Stomach (tissue), 19 donors: ENCODE measurements at regions of chr1 and their contacts with region 1.

Region 1: DNA sequence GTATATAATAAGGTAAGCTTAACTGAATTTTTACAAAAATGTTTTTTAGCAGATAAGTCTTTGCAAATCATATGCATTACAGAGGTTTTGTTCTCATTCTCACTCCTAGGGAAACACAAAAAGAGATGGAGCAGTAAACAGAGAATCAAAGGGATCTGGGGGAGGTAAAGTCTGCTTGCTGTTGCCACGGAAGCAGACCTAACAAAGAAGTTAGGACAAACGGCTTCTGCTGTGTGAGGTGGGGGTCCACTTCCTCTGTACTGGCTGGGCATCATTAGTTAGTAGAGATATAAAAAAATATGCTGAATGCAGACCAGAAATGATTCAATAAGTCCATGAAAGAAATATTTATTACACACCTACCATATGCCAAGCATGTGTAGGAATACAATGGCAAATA is 34.2 kb downstream of the GJA5 start:
- DNase-seq: no peak
- H3K4me3 ChIP-seq: no peak overlapping the region
- H3K27ac ChIP-seq: no peak overlapping the region
- H3K4me1 ChIP-seq: no peaks in the 10 kb centered on the region
- H3K27me3 ChIP-seq: peaks cover 0 to 40% (median 9%) of the 10 kb centered on the region in 3 donors
- CTCF ChIP-seq: no peak
- EP300 ChIP-seq: no peak
- POLR2A ChIP-seq: no peak

Region 2: DNA sequence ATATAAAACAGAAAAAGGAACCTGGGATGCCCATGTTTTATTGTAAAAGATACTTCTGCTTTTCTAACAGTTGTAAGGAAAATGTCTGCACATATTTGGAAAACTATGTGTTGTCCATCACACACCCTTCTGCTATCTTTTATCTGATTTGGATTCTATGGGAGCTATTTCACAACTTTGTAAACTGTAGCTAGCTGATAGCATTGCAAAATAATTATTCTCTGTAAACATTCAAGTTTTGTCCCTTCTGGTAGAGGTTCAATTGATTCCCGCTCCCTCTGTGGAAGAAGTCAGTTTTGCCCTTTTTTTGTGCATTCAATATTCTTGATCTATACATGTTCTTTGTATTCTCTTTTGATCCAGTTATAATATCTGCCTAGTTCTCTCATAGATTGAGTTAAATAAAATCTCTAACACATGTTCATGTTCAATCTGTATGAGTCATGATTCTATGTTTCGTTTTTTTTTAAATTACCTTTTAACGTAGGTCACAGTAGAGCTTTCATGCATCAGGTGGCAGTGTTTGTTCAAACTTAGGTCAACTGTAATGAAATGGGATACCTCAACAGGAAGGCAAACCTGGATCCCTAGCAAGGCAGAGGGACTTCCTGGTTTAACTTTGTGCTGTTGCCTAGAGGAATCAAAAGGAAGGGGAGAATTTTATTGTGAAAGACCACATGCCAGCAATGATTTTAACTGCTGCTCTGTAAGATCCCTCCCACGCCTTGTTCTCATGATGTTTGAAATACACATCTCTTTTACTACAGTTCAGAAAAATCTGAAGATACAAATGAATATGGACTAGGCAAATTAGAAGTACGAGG is 210.9 kb before region 1 on chr1:
- intact Hi-C with region 1: no loop called
- DNase-seq: peak; percentile 31 to 89
- H3K4me3 ChIP-seq: no peak overlapping the region
- H3K27ac ChIP-seq: peak overlapping the region in 2 of 5 donors; percentile 29 to 39
- H3K4me1 ChIP-seq: peaks cover 0 to 8% (median 4%) of the 10 kb centered on the region in 4 donors
- H3K27me3 ChIP-seq: no peaks in the 10 kb centered on the region
- CTCF ChIP-seq: peak in 2 of 7 experiments; percentile 18 to 70
- EP300 ChIP-seq: no peak
- POLR2A ChIP-seq: no peak

Region 3: DNA sequence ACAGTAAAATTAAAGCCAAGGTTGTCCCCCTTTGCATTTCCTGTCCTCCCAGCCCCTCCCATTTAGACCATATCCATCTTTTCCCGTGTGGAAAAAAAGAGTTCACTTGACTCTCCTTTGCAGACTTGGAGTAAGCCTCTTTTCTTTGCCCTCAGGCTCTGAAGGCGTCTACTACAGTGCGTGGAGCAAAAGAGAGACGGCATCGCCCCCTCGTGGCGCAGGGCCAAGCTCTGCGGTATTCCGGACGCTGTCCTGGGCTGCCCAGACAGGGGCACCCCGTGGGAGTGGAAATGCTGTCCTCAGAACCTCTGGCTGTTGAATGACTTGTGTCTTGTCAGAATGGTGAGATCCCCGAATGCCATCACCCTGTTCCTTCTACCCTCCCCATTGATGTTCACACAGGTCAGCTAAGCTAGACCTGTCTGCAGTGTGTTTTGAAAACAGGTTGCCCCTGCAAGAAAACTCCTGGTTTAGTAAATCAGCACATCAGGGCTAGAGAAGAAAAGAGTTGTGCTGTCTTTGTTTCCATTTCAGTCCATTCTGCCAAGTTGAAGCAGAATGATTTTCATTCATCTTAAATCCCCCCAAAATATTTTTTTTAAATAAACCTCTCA is 164.1 kb after region 1 on chr1:
- intact Hi-C with region 1: loop called (anchors 5 kb)
- DNase-seq: peak; percentile 74 to 90
- H3K4me3 ChIP-seq: no peak overlapping the region
- H3K27ac ChIP-seq: no peak overlapping the region
- H3K4me1 ChIP-seq: peaks cover 0 to 6% (median 2%) of the 10 kb centered on the region in 4 donors
- H3K27me3 ChIP-seq: peaks cover 0 to 13% (median 0%) of the 10 kb centered on the region in 3 donors
- CTCF ChIP-seq: peak in 4 of 7 experiments; percentile 6 to 48 (median 25)
- EP300 ChIP-seq: no peak
- POLR2A ChIP-seq: no peak